ENCODE measurements at regions of chr9 and their contacts with region 1.

Region 1: GRCh38 chr9:36036780-36037548 is at the start of gene RECK:
- DNase-seq: peak; percentile 68 to 92 (median 84)
- ATAC-seq: peak; percentile 94
- H3K4me3 ChIP-seq: peak within 1 kb of the TSS; percentile 85
- H3K4me3 Mint-ChIP-seq: peak within 1 kb of the TSS; percentile 94
- H3K27ac ChIP-seq: no peak within 1 kb of the TSS
- H3K27ac Mint-ChIP-seq: peak within 1 kb of the TSS; percentile 44
- H3K4me1 ChIP-seq: peaks cover 22% of the 10 kb centered on the region
- H3K4me1 Mint-ChIP-seq: peaks cover 45% of the 10 kb centered on the region
- H3K27me3 ChIP-seq: no peaks in the 10 kb centered on the region
- H3K27me3 Mint-ChIP-seq: no peaks in the 10 kb centered on the region
- CTCF ChIP-seq: no peak
- total RNA-seq, gene RECK: 9.3 to 9.8 TPM

Region 2: GRCh38 chr9:36086442-36086841 is 49.5 kb after region 1 on chr9:
- CTCF ChIA-PET with region 1: no interaction called
- POLR2A ChIA-PET with region 1: no interaction called
- intact Hi-C with region 1: loop called in 1 of 2 experiments (anchors 5 kb)
- DNase-seq: no peak
- ATAC-seq: no peak
- H3K4me3 ChIP-seq: no peak overlapping the region
- H3K4me3 Mint-ChIP-seq: no peak overlapping the region
- H3K27ac ChIP-seq: no peak overlapping the region
- H3K27ac Mint-ChIP-seq: no peak overlapping the region
- H3K4me1 ChIP-seq: no peaks in the 10 kb centered on the region
- H3K4me1 Mint-ChIP-seq: no peaks in the 10 kb centered on the region
- H3K27me3 ChIP-seq: no peaks in the 10 kb centered on the region
- H3K27me3 Mint-ChIP-seq: no peaks in the 10 kb centered on the region
- CTCF ChIP-seq: no peak

Measured in CD4-positive, alpha-beta T cell (primary cell).